ENCODE measurements at regions of chr1 and their contacts with region 1.

Region 1: GRCh38 chr1:171545523-171545922 is 60.2 kb downstream of the PRRC2C start:
- DNase-seq: no peak
- ATAC-seq: no peak
- H3K4me3 ChIP-seq: no peak overlapping the region
- H3K27ac ChIP-seq: no peak overlapping the region
- H3K4me1 ChIP-seq: no peaks in the 10 kb centered on the region
- H3K27me3 ChIP-seq: no peaks in the 10 kb centered on the region
- CTCF ChIP-seq: no peak
- EP300 ChIP-seq: no peak
- POLR2A ChIP-seq: no peak
- RAD21 ChIP-seq: no peak

Region 2: DNA sequence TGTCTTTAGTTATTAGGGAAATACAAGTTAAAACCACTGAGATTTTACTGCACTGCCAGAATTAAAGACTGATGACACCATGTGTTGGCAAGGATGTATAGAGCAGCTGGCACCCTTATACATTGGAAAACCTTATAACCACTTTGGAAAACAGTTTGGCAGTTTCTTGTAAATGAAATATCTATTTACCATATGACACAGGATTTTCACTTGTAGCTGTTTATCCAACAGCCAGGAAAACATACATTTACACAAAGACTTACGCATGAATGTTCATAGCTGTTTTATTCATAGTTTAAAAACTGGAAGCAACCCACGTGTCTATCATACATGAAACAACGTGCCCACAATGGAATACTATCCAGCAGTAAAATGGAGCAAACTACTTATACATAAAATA is 14.8 kb before region 1 on chr1:
- CTCF ChIA-PET with region 1: no interaction called
- POLR2A ChIA-PET with region 1: interaction called, 12 read pairs
- in situ Hi-C with region 1: no loop called
- intact Hi-C with region 1: no loop called
- DNase-seq: no peak
- ATAC-seq: no peak
- H3K4me3 ChIP-seq: no peak overlapping the region
- H3K27ac ChIP-seq: no peak overlapping the region
- H3K4me1 ChIP-seq: no peaks in the 10 kb centered on the region
- H3K27me3 ChIP-seq: no peaks in the 10 kb centered on the region
- CTCF ChIP-seq: no peak
- EP300 ChIP-seq: no peak
- POLR2A ChIP-seq: no peak
- RAD21 ChIP-seq: no peak

Region 3: GRCh38 chr1:171610385-171610784 is 64.9 kb after region 1 on chr1:
- CTCF ChIA-PET with region 1: no interaction called
- POLR2A ChIA-PET with region 1: no interaction called
- in situ Hi-C with region 1: no loop called
- intact Hi-C with region 1: no loop called
- DNase-seq: no peak
- ATAC-seq: no peak
- H3K4me3 ChIP-seq: no peak overlapping the region
- H3K27ac ChIP-seq: no peak overlapping the region
- H3K4me1 ChIP-seq: peaks cover 0 to 6% of the 10 kb centered on the region in 2 experiments; a peak in 2 of 5 replicates
- H3K27me3 ChIP-seq: no peaks in the 10 kb centered on the region; a peak in 1 of 5 replicates
- CTCF ChIP-seq: no peak
- EP300 ChIP-seq: no peak
- POLR2A ChIP-seq: no peak
- RAD21 ChIP-seq: no peak

Region 4: GRCh38 chr1:171644805-171645483 is 99.4 kb after region 1 on chr1:
- CTCF ChIA-PET with region 1: no interaction called
- POLR2A ChIA-PET with region 1: no interaction called
- in situ Hi-C with region 1: no loop called
- intact Hi-C with region 1: no loop called
- DNase-seq: peak; percentile 69 to 91 (median 72)
- ATAC-seq: peak; percentile 97
- H3K4me3 ChIP-seq: no peak overlapping the region
- H3K27ac ChIP-seq: no peak overlapping the region
- H3K4me1 ChIP-seq: peaks cover 0 to 4% of the 10 kb centered on the region in 2 experiments; a peak in 2 of 5 replicates
- H3K27me3 ChIP-seq: peaks cover 4 to 23% of the 10 kb centered on the region in 2 experiments; a peak in 3 of 5 replicates
- CTCF ChIP-seq: peak; percentile 92 to 96 (median 95)
- EP300 ChIP-seq: no peak
- POLR2A ChIP-seq: no peak
- RAD21 ChIP-seq: peak; percentile 74 to 92

Measured in K562 (cell line).